Activated CD4-positive, alpha-beta T cell treated with anti-CD3 and anti-CD28 coated beads, Interleukin-2, amount 10 ng/mL, durations not matched to agents 24 days and 14 days (primary cell): ENCODE measurements at regions of chr14 and their contacts with region 1.

Region 1: GRCh38 chr14:49692811-49693734 is at the start of gene KLHDC1:
- DNase-seq: peak; percentile 95
- H3K4me3 Mint-ChIP-seq: peak within 1 kb of the TSS; percentile 79
- H3K27ac Mint-ChIP-seq: peak within 1 kb of the TSS; percentile 84
- H3K4me1 Mint-ChIP-seq: peaks cover 18% of the 10 kb centered on the region
- H3K27me3 Mint-ChIP-seq: no peaks in the 10 kb centered on the region
- total RNA-seq, gene KLHDC1: 0.95 and 0.96 TPM in 2 replicates

Region 2: GRCh38 chr14:49598485-49599300 is 94.4 kb before region 1 on chr14 and contains the start of gene LRR1:
- intact Hi-C with region 1: loop called (anchors 1 kb)
- DNase-seq: peak; percentile 97
- H3K4me3 Mint-ChIP-seq: peak within 1 kb of the TSS; percentile 96
- H3K27ac Mint-ChIP-seq: peak within 1 kb of the TSS; percentile 94
- H3K4me1 Mint-ChIP-seq: peaks cover 25% of the 10 kb centered on the region
- H3K27me3 Mint-ChIP-seq: no peaks in the 10 kb centered on the region
- total RNA-seq, gene LRR1: 47.7 and 50.4 TPM in 2 replicates

Region 3: DNA sequence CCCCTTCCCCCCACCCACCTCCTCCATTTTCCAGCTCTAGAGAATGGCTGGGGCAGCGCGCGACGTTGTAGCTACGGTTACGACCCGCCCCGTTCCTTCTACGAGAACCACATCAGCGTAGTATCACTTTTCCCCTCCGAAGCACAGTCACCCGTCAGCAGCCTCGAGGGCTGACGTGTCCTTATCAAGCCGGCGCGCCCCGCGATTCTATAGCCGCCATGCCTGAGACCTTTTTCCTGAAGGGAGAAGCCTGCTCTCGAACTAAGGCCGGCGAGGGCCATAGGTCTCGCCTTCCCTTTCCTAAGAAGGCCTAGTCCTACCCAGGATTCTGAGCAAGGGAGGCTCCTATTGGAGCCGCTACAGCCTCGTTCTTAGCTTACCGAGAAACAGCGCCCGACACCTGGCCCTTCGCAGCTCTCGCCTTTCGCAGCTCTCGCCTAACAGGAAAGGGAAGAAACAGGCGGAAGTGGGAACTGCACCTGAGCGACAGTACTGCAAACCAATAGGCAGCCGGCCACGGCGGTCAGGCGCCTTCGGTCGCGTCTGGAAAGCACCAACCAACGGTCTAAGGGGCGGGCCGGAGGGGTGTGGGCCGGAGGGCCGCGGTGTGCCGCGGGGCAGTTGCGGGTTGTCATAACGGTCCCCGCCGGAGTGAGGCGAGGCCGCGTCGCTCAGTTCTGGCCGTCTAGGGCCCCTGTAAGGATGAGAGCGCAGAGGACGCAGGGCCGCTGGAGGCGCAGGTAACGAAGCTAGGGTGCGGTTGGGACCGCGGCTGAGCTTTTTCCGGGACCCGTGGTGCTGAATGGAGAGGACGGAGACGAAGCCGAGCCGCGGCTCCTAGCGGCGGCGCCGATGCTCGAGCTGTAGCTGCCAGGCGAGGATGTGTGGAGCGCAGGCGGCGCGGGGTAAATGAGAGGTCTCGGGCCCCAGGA is 72.6 kb before region 1 on chr14 and contains the starts of genes MGAT2 and RPL36AL:
- intact Hi-C with region 1: loop called (anchors 2 kb)
- DNase-seq: peak; percentile 99
- H3K4me3 Mint-ChIP-seq: peak within 1 kb of the TSS; percentile 96
- H3K27ac Mint-ChIP-seq: peak within 1 kb of the TSS; percentile 96
- H3K4me1 Mint-ChIP-seq: peaks cover 36% of the 10 kb centered on the region
- H3K27me3 Mint-ChIP-seq: no peaks in the 10 kb centered on the region
- total RNA-seq, gene MGAT2: 45.6 and 48.5 TPM in 2 replicates
- total RNA-seq, gene RPL36AL: 221 and 229 TPM in 2 replicates

Region 4: GRCh38 chr14:49679274-49679673 is 13.8 kb before region 1 on chr14:
- intact Hi-C with region 1: loop called (anchors 1 kb)
- DNase-seq: no peak
- H3K4me3 Mint-ChIP-seq: no peak overlapping the region
- H3K27ac Mint-ChIP-seq: peak overlapping the region; percentile 72
- H3K4me1 Mint-ChIP-seq: peaks cover 19% of the 10 kb centered on the region
- H3K27me3 Mint-ChIP-seq: no peaks in the 10 kb centered on the region

Region 5: DNA sequence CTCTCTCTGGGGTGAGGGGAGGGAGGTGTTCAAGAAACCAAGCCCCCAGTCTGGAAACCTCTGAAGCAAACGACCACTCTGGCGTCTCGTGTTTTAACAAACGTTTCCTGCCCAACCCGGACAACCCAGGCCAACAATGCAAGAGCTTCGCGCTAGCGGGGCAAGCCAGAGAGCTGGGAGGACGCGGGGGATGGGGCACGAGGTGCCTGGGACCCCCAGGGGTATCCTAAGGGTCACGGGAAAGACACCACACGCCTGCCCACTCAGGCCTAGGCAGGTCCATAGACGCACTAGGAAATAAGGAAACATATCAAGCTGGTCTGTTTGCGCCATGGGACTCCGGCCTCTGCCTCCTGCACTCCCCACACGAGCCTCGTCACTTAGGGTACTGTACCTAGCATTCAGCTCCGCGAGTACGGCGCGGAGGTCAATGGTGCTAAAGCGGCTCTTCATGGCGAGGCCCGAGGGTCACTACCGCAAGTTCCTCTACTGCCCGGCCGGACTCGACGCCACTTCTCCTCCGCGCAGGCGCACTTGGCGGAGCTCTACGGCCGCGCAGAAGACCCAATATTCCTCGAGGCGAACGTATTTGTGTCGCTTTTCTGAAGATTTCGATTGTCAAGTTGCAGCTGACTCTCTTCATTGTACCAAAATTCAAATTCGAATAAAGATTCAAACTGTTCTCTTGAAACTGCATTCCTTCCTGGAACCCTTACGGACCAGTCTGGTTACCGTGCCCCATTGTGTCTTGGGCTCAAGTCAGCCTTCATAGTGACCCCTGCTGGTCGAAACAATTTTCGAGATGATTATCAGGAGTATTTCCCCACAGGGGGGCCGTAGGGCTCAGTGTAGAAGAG is 159.5 kb after region 1 on chr14 and contains the start of gene NEMF:
- intact Hi-C with region 1: loop called (anchors 5 kb)
- DNase-seq: peak; percentile 96
- H3K4me3 Mint-ChIP-seq: peak within 1 kb of the TSS; percentile 93
- H3K27ac Mint-ChIP-seq: peak within 1 kb of the TSS; percentile 98
- H3K4me1 Mint-ChIP-seq: peaks cover 34% of the 10 kb centered on the region
- H3K27me3 Mint-ChIP-seq: no peaks in the 10 kb centered on the region
- total RNA-seq, gene NEMF: 65.8 and 75.4 TPM in 2 replicates